ENCODE measurements at regions of chr1 and their contacts with region 1.

Region 1: GRCh38 chr1:87478231-87478630 is 149.6 kb downstream of the LMO4 start:
- DNase-seq: no peak

Region 2: GRCh38 chr1:87542697-87543096 is 64.5 kb after region 1 on chr1:
- intact Hi-C with region 1: loop called in 1 of 2 experiments (anchors 2 kb)
- DNase-seq: no peak

Region 3: DNA sequence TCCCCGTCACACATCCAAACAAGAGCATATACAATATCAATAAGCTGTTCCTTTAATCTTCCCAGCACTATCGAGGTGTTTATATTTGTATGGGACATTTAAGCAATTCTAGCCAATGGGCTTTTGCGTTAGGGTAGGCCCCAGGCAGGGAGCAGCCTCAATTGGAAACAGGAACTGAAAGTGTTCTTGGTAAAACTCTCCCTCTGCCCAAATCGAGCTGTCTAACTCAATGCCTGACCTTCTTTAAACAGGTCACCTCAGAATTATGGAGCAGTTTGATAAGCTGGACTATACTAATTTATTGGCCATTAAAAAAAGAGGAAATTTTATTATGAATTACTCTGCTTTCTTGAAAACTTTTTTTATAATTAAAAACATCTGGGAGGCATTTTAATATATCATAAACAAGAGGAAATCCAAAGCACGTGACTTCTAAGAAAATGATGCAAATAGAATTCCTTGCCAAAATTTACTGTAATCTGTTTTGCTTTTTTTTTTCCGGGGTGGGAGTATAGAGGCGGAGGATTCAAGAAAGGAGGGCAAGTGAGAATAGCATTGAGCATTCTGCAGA is 348.5 kb after region 1 on chr1:
- intact Hi-C with region 1: no loop called
- DNase-seq: no peak